ENCODE measurements at regions of chr1 and their contacts with region 1.

Region 1: DNA sequence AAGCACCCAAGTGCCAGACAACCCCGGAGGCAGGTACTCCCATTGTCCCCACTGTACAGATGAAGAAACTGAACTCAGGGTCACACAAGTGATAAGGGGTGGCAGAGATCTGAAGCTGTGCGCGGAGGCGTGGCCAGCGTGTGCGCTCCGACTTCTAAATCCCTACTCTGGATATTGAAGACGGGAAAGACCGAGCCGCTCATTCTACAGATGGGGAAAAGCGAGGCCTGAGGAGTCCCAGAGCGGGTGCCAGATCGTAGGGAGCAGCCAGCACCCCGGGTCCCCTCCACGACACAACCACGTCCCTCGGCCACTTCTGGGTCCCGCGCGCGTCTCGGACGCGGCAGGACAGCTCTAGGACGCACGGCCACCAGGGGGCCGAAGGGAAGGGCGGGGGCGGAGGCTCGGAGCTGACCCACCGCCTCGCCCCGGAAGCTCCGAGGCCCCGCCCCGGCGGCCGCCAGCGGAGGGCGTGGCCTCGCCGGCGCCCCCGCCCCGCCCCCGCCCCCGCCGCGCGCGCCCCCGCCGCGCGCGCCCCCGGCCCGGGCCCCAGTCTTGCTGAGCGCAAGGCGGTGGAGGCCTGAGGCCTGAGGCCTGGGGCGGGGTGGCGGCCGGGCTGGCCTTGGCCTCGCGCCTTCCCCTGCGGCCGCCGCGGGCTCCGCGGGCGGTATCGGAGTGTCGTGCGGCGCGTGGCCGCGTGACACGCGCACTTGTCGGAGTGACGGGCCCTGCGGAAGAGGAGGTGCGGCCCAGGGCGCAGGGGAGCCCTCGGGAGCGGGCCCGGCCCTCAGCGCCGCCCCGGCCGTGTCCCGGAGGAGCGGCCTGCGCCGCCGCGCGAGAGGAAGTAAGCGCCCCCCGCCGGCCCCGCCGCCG is at the start of gene H6PD:
- DNase-seq: peak; percentile 76 to 85
- ATAC-seq: peak; percentile 37 to 42
- H3K4me3 ChIP-seq: peak within 1 kb of the TSS; percentile 74 to 87 (median 79)
- H3K27ac ChIP-seq: peak within 1 kb of the TSS; percentile 86 to 99 (median 92)
- H3K4me1 ChIP-seq: peaks cover 65 to 69% of the 10 kb centered on the region in 2 donors
- H3K27me3 ChIP-seq: no peaks in the 10 kb centered on the region
- CTCF ChIP-seq: peak; percentile 71 to 97 (median 87)
- POLR2A ChIP-seq: peak; percentile 89 to 97
- total RNA-seq, gene H6PD: 37.3 to 65.1 (median 44.4) TPM

Region 2: DNA sequence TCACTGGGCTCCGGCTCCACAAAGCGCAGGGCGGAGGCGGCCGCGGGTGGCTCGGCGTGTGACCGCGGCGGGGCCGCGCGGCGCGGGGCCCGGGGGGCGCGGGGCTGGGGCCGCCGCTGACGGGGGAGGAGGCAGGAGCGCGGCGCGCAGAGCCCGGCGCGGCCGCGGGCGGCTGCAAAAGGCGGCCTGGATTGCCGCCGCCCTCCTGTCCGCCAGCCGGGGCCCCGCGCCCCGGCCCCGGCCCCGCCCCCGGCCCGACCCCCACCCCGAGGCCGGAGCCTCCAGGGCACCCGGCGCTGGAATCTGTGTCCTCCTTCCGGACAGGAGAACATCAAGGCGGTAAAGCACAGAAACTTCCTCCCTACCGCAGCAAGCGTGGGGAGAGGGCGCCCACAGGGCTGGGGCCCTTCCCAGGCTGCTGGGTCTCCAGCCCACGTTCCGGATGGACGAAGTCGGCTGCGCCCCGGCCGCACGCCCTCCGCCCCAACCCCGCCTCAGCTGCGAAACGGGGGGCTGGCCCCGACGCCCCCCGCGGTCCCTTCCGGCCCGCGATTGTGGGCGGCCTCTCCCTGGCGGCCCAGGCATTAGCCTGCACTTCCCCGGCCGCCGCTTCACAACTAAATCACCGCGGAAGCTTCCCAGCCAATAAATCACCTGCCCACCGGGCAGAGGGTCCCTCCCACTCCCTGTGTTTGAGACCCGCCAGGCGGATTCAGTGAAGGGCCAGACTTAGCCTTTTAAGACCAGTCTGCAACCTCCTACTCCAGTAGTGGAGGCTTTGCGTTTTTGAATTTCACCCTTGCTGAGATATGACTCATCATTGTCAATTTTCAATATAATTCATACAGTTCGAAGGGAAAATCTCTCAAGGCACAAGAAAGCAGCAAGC is 810.6 kb before region 1 on chr1:
- in situ Hi-C with region 1: no loop called
- intact Hi-C with region 1: loop called (anchors 10 kb)
- DNase-seq: peak in 1 of 2 donors; percentile 59
- ATAC-seq: peak; percentile 2 to 18
- H3K4me3 ChIP-seq: peak overlapping the region; percentile 77 to 95 (median 92)
- H3K27ac ChIP-seq: peak overlapping the region; percentile 91 to 100 (median 96)
- H3K4me1 ChIP-seq: peaks cover 52 to 65% of the 10 kb centered on the region in 2 donors
- H3K27me3 ChIP-seq: no peaks in the 10 kb centered on the region
- CTCF ChIP-seq: peak in 2 of 5 experiments; percentile 19 to 27
- POLR2A ChIP-seq: no peak

Region 3: DNA sequence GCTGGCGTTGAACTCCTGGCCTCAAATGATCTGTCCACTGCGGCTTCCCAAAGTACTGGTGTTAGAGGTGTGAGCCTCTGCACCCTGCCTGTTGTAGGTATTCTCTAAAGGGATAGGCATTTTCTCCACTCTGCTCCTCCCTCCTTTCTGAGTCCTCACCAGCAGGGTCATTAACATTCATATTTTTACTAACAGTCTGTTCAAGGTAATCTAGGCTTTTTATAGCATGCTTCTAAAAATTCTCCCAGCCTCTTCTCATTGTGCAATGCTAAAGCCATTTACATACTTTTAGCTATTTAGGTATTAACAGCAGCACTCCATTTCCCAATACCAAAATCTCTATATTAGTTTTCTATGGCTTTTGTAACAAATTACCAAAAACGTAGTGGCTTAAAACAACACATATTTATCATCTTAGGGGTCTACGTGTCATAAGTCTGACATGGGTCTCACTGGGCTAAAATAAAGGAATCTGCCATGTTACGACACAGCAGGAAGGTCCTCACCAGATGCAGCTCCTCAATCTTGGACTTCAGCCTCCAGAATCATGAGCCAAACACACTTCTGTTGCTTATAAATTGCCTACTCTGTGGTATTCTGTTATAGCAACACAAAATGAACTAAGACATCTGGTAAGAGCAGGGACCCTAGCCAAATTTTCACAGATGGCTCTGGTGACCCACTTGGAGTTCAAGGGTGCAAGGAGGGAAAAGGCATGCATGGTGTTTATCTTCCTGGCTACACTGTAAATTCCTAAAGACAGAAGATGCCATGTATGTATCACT is 205.3 kb before region 1 on chr1:
- in situ Hi-C with region 1: no loop called
- intact Hi-C with region 1: no loop called
- DNase-seq: no peak
- ATAC-seq: no peak
- H3K4me3 ChIP-seq: no peak overlapping the region
- H3K27ac ChIP-seq: no peak overlapping the region
- H3K4me1 ChIP-seq: no peaks in the 10 kb centered on the region
- H3K27me3 ChIP-seq: no peaks in the 10 kb centered on the region
- CTCF ChIP-seq: no peak
- POLR2A ChIP-seq: no peak

Region 4: GRCh38 chr1:9110669-9111356 is 123.6 kb before region 1 on chr1:
- in situ Hi-C with region 1: no loop called
- intact Hi-C with region 1: no loop called
- DNase-seq: peak; percentile 69 to 83
- ATAC-seq: peak; percentile 22 to 42
- H3K4me3 ChIP-seq: no peak overlapping the region
- H3K27ac ChIP-seq: peak overlapping the region in 1 of 4 donors; percentile 18
- H3K4me1 ChIP-seq: peaks cover 0 to 4% of the 10 kb centered on the region in 2 donors
- H3K27me3 ChIP-seq: no peaks in the 10 kb centered on the region
- CTCF ChIP-seq: peak; percentile 92 to 96 (median 94)
- POLR2A ChIP-seq: no peak

Region 5: DNA sequence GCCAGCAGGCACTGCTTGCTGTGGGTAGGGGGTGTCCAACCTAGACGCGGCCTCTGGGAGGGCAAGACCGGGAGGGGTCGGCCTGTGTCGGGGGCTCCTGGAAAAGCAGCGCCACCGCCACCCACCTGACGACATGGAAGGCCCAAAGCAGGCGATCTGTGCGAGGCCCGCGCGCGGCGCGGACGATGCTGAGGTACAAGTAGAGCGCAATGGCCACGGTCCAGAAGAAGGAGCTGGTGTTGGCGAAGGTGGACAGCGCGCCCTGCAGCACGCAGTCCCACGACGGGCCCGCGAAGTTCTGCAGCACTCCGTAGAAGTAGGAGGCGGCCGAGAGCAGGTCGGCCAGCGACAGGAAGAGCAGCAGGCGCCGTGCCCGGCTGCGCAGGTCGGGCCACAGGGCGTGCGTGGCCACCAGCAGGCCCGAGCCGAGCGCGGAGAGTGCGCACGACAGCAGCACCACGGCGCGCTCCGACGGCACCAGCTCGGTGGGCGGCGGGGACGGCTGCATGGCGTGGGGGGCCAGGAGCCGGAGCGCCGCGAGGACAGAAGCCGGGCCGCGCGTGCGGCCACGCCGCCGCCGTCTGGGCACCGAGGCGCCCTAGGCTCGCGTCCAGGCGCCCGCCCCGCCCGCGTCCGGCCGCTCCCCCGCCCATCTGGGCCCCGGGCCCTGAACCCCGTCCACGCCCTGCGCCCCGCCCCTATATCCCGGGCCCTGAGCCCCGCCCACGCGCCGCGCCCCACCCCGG is 105.8 kb before region 1 on chr1 and contains the start of gene GPR157:
- in situ Hi-C with region 1: no loop called
- intact Hi-C with region 1: loop called (anchors 2 kb)
- DNase-seq: peak; percentile 86 to 87
- ATAC-seq: peak; percentile 53 to 65
- H3K4me3 ChIP-seq: peak within 1 kb of the TSS; percentile 72 to 97 (median 82)
- H3K27ac ChIP-seq: peak within 1 kb of the TSS; percentile 94 to 99 (median 98)
- H3K4me1 ChIP-seq: peaks cover 26 to 39% of the 10 kb centered on the region in 2 donors
- H3K27me3 ChIP-seq: no peaks in the 10 kb centered on the region
- CTCF ChIP-seq: peak in 4 of 5 experiments; percentile 22 to 43 (median 37)
- POLR2A ChIP-seq: peak; percentile 96 to 97
- total RNA-seq, gene GPR157: 12.9 to 38.1 (median 18.9) TPM

Region 6: DNA sequence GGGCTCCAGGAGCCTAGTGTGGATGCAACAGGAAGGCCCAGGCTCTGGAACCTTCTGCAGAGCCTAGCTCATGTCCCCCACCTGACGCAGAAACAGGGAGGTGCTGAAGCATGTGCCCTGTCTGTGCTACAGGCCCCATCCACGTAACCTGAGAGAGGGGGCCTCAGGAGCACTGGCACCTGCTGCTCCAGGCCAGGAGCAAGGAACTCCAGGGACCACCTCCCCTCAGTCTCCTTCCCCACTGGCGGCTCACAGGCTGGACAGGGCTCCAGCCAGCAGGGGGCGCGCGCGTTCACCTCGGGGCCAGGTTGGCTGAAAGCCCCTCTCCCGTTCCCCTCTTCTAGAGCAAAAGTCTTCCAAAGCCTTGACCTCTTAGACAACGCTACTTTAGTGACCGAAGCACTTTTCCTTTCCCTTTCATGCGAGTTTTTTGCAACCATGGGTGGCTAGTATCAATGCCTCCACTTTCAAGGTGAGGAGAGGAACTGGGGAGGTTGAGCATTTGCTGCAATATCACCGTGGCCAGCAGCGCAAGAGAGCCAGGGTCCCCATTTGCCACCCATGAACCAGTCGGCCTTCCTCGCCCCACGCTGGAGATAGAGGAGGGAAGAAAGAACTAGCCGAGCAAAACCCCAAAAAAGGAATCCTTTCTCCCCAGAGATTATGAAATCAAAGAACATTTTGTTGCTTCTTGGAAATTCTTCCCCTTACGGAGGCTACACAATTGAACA is 53.1 kb before region 1 on chr1:
- in situ Hi-C with region 1: no loop called
- intact Hi-C with region 1: loop called (anchors 5 kb)
- DNase-seq: peak in 1 of 2 donors; percentile 52
- ATAC-seq: peak; percentile 44 to 84
- H3K4me3 ChIP-seq: peak overlapping the region; percentile 60 to 76 (median 64)
- H3K27ac ChIP-seq: no peak overlapping the region
- H3K4me1 ChIP-seq: peaks cover 0 to 3% of the 10 kb centered on the region in 2 donors
- H3K27me3 ChIP-seq: peaks cover 0 to 8% (median 8%) of the 10 kb centered on the region in 3 donors
- CTCF ChIP-seq: peak; percentile 70 to 97 (median 94)
- POLR2A ChIP-seq: no peak

Region 7: GRCh38 chr1:9192578-9193232 is 41.8 kb before region 1 on chr1:
- in situ Hi-C with region 1: no loop called
- intact Hi-C with region 1: no loop called
- DNase-seq: no peak
- ATAC-seq: no peak
- H3K4me3 ChIP-seq: no peak overlapping the region
- H3K27ac ChIP-seq: no peak overlapping the region
- H3K4me1 ChIP-seq: peaks cover 13 to 19% of the 10 kb centered on the region in 2 donors
- H3K27me3 ChIP-seq: peaks cover 0 to 6% (median 4%) of the 10 kb centered on the region in 3 donors
- CTCF ChIP-seq: no peak
- POLR2A ChIP-seq: no peak

Region 8: GRCh38 chr1:9249534-9250410 is 15.3 kb after region 1 on chr1:
- in situ Hi-C with region 1: no loop called
- intact Hi-C with region 1: loop called (anchors 1 kb)
- DNase-seq: peak; percentile 79 to 90
- ATAC-seq: peak; percentile 21 to 22
- H3K4me3 ChIP-seq: peak overlapping the region in 3 of 4 donors; percentile 2 to 39 (median 35)
- H3K27ac ChIP-seq: peak overlapping the region; percentile 86 to 99 (median 92)
- H3K4me1 ChIP-seq: peaks cover 88 to 94% of the 10 kb centered on the region in 2 donors
- H3K27me3 ChIP-seq: no peaks in the 10 kb centered on the region
- CTCF ChIP-seq: peak in 4 of 5 experiments; percentile 46 to 84 (median 78)
- POLR2A ChIP-seq: peak in 1 of 2 donors; percentile 13

Region 9: DNA sequence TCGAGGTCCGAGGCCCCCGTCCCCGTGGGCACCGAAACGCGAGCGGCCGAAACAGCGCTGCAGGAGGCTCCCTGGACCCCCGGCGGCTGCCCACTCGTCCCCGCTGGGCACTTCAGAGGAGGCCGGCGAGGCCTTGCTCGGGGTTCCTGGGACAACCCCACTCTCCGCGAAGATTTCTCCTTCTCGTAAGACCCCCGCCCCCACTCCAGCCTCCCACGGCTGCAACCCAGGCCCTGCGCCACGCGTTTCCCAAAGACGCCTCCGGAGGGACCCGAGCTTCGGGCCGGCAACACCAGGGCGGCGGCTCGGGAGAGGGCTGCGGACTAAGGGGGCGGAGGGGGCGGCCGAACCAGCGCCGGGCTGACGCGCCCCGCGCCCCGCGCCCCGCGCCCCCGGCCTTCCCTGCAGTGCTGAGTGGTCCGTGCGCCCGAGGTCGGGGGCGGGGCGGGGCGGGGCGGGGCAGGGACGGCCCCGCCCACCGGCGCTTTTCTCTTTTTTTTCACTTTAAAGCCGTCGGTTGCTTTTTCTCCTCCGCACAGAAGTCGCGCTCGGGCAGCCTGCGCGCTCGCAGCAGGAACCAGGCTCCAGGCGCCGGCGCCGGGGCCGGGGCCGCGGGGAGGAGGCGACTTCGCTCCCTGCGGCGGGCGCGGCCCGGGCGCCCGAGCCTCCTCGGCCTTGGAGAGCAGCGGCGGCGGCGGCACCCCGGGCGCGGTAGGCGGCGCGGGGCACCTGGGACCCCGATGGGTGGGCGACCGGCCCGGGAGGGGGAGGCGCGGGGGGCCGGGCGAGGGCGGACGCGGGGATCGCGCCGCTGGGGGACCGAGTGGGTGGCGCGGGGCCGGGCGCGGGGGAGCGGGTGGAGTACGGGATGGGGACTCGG is 58.1 kb after region 1 on chr1 and contains the start of gene SPSB1:
- in situ Hi-C with region 1: no loop called
- intact Hi-C with region 1: loop called (anchors 2 kb)
- DNase-seq: peak; percentile 62 to 67
- ATAC-seq: peak; percentile 46 to 48
- H3K4me3 ChIP-seq: peak within 1 kb of the TSS; percentile 67 to 98 (median 86)
- H3K27ac ChIP-seq: peak within 1 kb of the TSS; percentile 80 to 95 (median 90)
- H3K4me1 ChIP-seq: peaks cover 18 to 39% of the 10 kb centered on the region in 2 donors
- H3K27me3 ChIP-seq: no peaks in the 10 kb centered on the region
- CTCF ChIP-seq: no peak
- POLR2A ChIP-seq: peak; percentile 95 to 97
- total RNA-seq, gene SPSB1: 40.4 to 161 (median 56.6) TPM

Region 10: GRCh38 chr1:10856863-10857598 is 1622.6 kb after region 1 on chr1:
- in situ Hi-C with region 1: no loop called
- intact Hi-C with region 1: loop called (anchors 10 kb)
- DNase-seq: peak; percentile 50 to 72
- ATAC-seq: peak; percentile 54 to 64
- H3K4me3 ChIP-seq: peak overlapping the region; percentile 2 to 35 (median 16)
- H3K27ac ChIP-seq: peak overlapping the region; percentile 91 to 99 (median 93)
- H3K4me1 ChIP-seq: peaks cover 55 to 57% of the 10 kb centered on the region in 2 donors
- H3K27me3 ChIP-seq: no peaks in the 10 kb centered on the region
- CTCF ChIP-seq: no peak
- POLR2A ChIP-seq: peak; percentile 45 to 49

Measured in gastrocnemius medialis (tissue), 4 donors.